ENCODE measurements at regions of chr5 and their contacts with region 1.

Region 1: DNA sequence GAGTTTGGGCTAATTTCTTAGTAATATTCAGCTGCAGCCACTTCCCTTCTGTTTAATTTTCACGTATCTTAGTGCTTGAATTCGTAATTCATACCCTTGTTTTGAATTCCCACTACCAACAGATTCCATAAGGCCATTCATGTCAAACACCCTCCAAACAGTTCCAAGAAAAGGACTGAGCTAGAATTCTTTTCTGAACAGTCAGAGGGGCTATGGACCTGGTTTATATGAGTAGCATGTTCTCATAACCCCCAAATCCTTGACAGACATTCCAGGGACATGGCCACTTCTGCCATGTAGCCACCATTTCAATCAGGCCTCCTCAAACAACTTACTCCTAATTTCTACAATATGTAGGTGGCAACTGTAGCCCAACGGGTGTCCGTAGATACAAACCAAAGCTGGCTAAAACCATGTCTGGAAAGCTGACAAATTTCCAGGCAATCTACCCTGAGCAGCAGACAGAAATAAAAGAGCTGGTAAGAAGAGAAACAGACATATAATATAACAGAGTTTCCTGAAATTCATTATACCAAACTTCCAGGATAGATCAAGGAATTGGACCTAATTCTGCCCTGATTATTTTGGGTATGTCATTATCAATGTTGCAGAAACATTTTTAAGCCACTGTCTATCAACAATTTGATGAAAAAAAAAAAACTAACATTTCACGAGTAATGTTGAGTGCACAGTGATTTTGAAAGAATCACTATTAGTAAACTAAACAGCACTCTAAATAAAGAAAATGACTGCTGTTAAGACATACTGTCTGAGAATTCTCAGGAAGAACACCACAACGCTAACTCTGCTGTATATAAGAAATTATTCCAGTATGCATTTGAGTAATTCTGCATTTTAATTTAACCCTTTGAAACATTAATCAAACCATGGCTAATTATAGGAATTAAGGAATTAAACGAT is 40.7 kb downstream of the EBF1 start:
- DNase-seq: no peak
- ATAC-seq: no peak
- H3K4me3 ChIP-seq: no peak overlapping the region
- H3K27ac ChIP-seq: no peak overlapping the region
- H3K4me1 ChIP-seq: peaks cover 4% of the 10 kb centered on the region; the same call in 1 of the 2 replicates
- H3K27me3 ChIP-seq: no peaks in the 10 kb centered on the region
- CTCF ChIP-seq: no peak
- POLR2A ChIP-seq: no peak
- RAD21 ChIP-seq: no peak

Region 2: GRCh38 chr5:159094745-159095144 is 35.8 kb after region 1 on chr5:
- CTCF ChIA-PET with region 1: no interaction called
- POLR2A ChIA-PET with region 1: no interaction called
- dilution Hi-C with region 1: no loop called
- in situ Hi-C with region 1: no loop called
- intact Hi-C with region 1: loop called (anchors 5 kb)
- DNase-seq: peak; percentile 69
- ATAC-seq: no peak
- H3K4me3 ChIP-seq: no peak overlapping the region
- H3K27ac ChIP-seq: no peak overlapping the region
- H3K4me1 ChIP-seq: peaks cover 2% of the 10 kb centered on the region
- H3K27me3 ChIP-seq: peaks cover 9% of the 10 kb centered on the region; the same call in 1 of the 2 replicates
- CTCF ChIP-seq: no peak
- POLR2A ChIP-seq: no peak
- RAD21 ChIP-seq: no peak

Measured in IMR-90 (cell line).